ENCODE measurements at regions of chr12 and their contacts with region 1.

Region 1: DNA sequence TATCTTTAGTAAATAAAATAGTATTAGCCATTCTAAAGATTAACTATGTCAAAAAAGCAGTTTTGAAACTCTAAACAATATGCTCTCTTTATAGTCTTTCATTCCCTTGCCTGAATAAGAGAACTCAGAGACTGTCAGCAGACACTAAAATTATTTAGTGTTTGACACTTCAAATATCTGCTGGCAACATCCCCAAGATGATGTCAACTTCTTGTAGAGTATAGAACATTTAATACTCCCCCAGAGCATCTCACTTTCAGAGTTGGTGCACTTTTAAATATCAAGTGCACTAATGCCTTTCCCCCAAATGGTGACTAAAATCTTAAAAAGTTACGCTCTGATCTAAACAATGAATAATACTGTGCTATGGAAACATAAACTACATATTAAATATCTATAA is 374.9 kb downstream of the SLC6A15 start:
- DNase-seq: no peak
- H3K4me3 ChIP-seq: no peak overlapping the region
- H3K27ac ChIP-seq: no peak overlapping the region
- H3K4me1 ChIP-seq: no peaks in the 10 kb centered on the region
- H3K27me3 ChIP-seq: no peaks in the 10 kb centered on the region
- CTCF ChIP-seq: no peak
- EP300 ChIP-seq: no peak
- POLR2A ChIP-seq: no peak

Region 2: DNA sequence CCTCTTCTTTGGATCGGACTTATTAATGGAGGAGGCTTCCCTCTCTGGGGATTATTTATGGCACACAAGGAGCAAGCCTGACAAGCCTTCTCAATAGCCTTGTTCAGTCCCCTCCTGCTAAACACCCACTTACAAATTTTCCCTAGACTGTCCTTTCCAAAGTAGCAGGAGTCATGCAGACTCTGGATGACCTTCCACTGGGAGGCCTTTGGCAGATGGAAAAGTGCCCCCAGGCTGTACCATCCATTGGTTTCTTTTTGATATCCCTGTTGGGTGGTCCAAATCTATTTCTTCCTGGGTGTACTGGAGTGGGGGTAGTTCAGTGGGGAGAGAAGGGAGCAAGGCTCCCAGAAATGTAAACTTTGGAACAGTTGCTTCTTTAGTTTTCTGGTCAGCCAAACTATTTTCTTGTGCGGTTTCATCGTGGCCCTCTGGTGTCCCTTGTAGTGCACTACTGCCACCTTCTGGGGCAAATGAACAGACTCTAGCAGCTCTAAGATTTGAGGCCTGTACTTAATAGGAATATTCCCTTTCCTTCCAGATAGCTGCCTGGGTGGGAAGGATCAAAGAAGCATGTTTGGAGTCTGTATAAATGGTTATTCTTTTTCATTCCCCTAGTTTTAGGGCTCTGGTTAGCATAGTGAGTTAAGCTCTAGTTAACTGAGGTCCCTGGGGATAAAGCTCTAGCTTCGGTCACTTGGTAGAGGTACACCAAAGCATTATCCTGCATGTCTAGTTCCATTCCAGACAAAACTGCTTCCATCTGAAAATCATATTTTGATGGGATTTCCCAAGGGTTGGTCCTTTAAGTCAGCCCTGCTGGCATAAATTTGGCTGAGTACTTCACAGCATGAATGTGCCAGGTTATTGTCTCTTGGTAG is 34.5 kb before region 1 on chr12:
- intact Hi-C with region 1: no loop called
- DNase-seq: no peak
- H3K4me3 ChIP-seq: no peak overlapping the region
- H3K27ac ChIP-seq: no peak overlapping the region
- H3K4me1 ChIP-seq: no peaks in the 10 kb centered on the region
- H3K27me3 ChIP-seq: no peaks in the 10 kb centered on the region
- CTCF ChIP-seq: no peak
- EP300 ChIP-seq: no peak
- POLR2A ChIP-seq: no peak

Region 3: GRCh38 chr12:84551373-84551772 is 13.7 kb after region 1 on chr12:
- intact Hi-C with region 1: loop called in 1 of 4 experiments (anchors 2 kb)
- DNase-seq: no peak
- H3K4me3 ChIP-seq: no peak overlapping the region
- H3K27ac ChIP-seq: no peak overlapping the region
- H3K4me1 ChIP-seq: no peaks in the 10 kb centered on the region
- H3K27me3 ChIP-seq: no peaks in the 10 kb centered on the region
- CTCF ChIP-seq: no peak
- EP300 ChIP-seq: no peak
- POLR2A ChIP-seq: no peak

Region 4: GRCh38 chr12:85642810-85643209 is 1105.1 kb after region 1 on chr12:
- intact Hi-C with region 1: loop called in 1 of 4 experiments (anchors 5 kb)
- DNase-seq: no peak
- H3K4me3 ChIP-seq: no peak overlapping the region
- H3K27ac ChIP-seq: no peak overlapping the region
- H3K4me1 ChIP-seq: no peaks in the 10 kb centered on the region
- H3K27me3 ChIP-seq: no peaks in the 10 kb centered on the region
- CTCF ChIP-seq: no peak
- EP300 ChIP-seq: no peak
- POLR2A ChIP-seq: no peak

Measured in ovary (tissue), 10 donors.